Right ventricle myocardium inferior (tissue), 1 donor: ENCODE measurements at regions of chr10 and their contacts with region 1.

Region 1: GRCh38 chr10:22251751-22252223 is 34.0 kb upstream of the EBLN1 start:
- DNase-seq: peak; percentile 88
- ATAC-seq: peak; percentile 71

Region 2: GRCh38 chr10:22054961-22055360 is 196.8 kb before region 1 on chr10:
- intact Hi-C with region 1: no loop called
- DNase-seq: no peak
- ATAC-seq: no peak

Region 3: DNA sequence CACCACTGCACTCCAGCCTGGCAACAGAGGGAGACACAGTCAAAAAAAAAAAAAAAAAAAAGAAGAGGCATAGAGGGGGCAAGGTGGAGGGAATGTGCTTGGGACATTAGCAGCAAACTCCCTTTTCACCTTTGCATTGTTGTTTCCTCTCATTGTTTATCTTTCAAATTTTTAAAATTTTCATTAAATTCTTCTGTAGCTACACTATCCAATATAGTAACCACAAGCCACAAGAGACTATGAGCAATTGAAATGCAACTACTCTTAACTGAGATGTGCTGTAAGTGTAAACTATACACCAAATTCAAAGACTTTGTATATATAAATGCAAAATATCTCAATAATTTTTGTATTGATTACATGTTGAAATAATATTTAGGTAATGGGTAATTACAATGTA is 77.3 kb before region 1 on chr10:
- intact Hi-C with region 1: no loop called
- DNase-seq: no peak
- ATAC-seq: no peak

Region 4: DNA sequence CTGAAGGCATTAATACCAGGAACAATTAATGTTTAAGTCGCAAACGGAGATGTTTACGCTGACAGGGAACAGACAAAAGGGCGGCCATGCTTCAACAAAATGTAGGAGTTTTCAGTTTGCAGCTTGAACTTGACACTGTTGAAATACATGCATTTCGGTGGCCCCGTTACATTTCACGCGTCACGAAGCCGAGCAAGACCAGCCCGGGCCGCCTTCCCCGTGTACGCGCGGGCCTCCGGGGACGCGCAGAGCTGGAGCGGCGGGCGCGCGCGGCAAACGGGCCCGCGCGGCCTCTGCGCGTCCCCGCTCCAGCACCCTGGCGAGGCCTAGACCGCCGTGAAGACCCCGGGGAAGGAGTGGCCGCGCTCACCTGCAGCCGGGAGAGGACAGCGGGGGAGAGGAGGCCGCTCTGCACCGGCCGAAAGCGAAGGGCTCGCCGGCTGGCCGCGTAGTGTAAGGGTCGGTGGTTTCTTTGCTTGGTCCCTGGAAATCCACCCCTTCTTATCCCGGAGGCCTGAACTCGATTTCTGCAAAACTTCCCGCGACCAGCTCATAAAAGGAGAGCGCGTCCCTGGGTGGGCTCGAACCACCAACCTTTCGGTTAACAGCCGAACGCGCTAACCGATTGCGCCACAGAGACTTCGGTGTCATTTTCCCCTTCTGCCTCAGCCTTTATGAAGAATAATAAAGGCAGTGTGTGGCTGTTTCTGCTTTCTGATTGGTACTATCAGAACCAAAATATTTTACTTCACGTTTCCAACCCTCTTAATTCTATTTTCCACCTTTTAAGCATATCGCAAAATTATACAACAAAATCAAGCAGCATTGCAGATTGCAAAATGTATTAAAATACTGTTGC is 22.6 kb before region 1 on chr10:
- intact Hi-C with region 1: loop called (anchors 1 kb)
- DNase-seq: peak; percentile 90
- ATAC-seq: peak; percentile 99

Region 5: DNA sequence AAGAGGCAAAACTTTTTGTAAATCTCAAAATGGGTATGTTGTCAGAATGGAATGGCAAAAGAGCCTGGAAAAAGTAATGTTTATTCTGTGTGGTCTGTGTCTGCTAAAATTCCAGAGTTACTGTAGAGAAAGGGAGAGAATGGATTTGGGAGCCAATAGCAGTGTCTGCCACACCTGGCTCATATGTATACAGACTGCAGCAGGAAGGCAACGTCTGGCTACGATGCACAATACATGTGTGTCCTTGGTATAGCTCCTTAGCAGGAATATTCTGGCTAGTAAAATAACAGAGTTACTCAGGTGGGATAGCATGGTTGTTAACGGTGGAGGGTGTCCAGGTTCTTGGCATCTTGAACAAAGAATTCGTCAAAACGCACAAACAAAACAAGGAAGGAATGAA is 25.9 kb after region 1 on chr10:
- intact Hi-C with region 1: no loop called
- DNase-seq: no peak
- ATAC-seq: no peak

Region 6: GRCh38 chr10:22316285-22317120 is 64.7 kb after region 1 on chr10 and contains the start of gene COMMD3:
- intact Hi-C with region 1: loop called (anchors 2 kb)
- DNase-seq: peak; percentile 96
- ATAC-seq: peak; percentile 92
- total RNA-seq, gene COMMD3: 89.9 TPM

Region 7: GRCh38 chr10:22550732-22551131 is 298.9 kb after region 1 on chr10:
- intact Hi-C with region 1: loop called (anchors 10 kb)
- DNase-seq: no peak
- ATAC-seq: no peak